ENCODE measurements at regions of chr12 and their contacts with region 1.

Region 1: DNA sequence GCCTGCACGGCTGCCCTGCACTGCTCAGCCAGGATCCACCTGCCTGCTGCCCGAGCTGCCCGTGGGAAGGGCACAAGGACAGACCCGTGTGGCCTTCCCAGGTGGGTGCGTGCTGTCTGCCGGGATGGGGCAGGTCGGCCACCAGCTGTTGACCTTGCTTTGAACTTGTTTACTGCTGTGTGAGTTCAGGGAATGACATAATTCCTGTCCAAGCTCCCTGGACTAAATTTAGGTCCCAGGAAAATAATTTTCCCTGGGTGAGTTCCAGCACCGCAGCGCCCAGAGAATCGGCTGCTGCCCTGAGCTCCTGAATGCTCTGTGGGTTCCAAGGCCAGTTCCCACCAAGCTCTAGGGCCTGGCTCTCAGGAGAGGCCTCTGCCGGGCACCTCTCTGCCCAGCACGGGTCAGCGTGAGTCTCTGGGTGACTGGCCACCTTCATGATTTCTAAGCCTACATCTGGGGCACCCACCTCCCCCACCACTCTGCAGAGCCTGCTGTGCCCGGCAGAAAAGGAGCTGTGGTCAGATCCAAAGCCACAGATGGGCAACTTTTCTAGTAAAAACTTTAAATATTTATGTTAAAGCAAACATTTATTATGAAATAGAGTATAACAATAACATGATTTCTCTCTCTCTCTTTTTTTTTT is 27.2 kb upstream of the MLXIP start:
- DNase-seq: peak in 1 of 2 donors; percentile 43
- H3K4me3 ChIP-seq: no peak overlapping the region
- H3K27ac ChIP-seq: peak overlapping the region in 4 of 5 donors; percentile 20 to 77 (median 42)
- H3K4me1 ChIP-seq: peaks cover 5 to 40% (median 20%) of the 10 kb centered on the region in 4 donors
- H3K27me3 ChIP-seq: no peaks in the 10 kb centered on the region
- CTCF ChIP-seq: no peak
- EP300 ChIP-seq: no peak
- POLR2A ChIP-seq: no peak

Region 2: DNA sequence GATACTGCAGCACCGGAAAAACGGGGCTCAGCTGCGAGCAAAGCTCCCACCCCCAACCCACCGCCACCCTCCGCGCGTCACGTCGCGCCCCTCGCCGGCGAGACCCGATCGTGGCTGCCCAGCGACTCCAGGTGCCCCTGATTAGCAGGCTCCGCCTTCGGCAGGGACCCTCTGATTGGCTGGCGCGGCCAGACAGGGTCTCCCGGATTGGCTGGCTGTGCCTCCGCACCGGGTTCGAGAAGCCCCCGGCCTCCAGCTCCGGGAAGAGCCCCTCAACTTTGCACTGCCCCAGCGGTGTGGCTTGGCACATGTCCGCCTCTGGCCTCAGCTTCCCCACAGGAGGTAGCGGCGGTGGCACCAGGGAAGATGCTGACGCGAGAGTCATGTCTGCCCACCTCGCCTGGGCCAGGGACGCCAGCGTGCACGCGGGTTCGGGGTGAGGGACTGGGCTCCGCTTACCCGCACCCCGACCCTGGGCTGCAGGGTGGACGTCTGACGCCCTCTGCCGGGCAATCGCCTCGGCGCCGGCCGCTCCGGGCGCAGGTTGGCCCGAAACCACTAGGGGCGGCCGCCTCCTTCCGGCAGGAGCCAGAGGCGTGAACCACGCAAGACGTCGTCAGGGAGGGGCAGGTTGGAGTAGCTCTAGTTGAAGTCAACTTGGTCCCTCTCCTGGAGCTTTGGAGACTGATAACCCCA is 257.4 kb before region 1 on chr12:
- intact Hi-C with region 1: no loop called
- DNase-seq: peak; percentile 94 to 98
- H3K4me3 ChIP-seq: peak overlapping the region; percentile 58 to 61 (median 59)
- H3K27ac ChIP-seq: peak overlapping the region; percentile 99 to 100 (median 100)
- H3K4me1 ChIP-seq: peaks cover 66 to 100% (median 79%) of the 10 kb centered on the region in 4 donors
- H3K27me3 ChIP-seq: no peaks in the 10 kb centered on the region
- CTCF ChIP-seq: peak in 6 of 7 experiments; percentile 76 to 100 (median 98)
- EP300 ChIP-seq: no peak
- POLR2A ChIP-seq: no peak

Region 3: GRCh38 chr12:122126713-122127597 is 75.6 kb after region 1 on chr12:
- intact Hi-C with region 1: loop called (anchors 5 kb)
- DNase-seq: peak in 1 of 2 donors; percentile 40
- H3K4me3 ChIP-seq: no peak overlapping the region
- H3K27ac ChIP-seq: peak overlapping the region in 1 of 5 donors; percentile 34
- H3K4me1 ChIP-seq: peaks cover 35 to 57% (median 50%) of the 10 kb centered on the region in 4 donors
- H3K27me3 ChIP-seq: no peaks in the 10 kb centered on the region
- CTCF ChIP-seq: peak in 1 of 7 experiments; percentile 15
- EP300 ChIP-seq: no peak
- POLR2A ChIP-seq: no peak

Measured in stomach (tissue), 19 donors.